Lower lobe of right lung (tissue), 2 donors: ENCODE measurements at regions of chr2 and their contacts with region 1.

Region 1: DNA sequence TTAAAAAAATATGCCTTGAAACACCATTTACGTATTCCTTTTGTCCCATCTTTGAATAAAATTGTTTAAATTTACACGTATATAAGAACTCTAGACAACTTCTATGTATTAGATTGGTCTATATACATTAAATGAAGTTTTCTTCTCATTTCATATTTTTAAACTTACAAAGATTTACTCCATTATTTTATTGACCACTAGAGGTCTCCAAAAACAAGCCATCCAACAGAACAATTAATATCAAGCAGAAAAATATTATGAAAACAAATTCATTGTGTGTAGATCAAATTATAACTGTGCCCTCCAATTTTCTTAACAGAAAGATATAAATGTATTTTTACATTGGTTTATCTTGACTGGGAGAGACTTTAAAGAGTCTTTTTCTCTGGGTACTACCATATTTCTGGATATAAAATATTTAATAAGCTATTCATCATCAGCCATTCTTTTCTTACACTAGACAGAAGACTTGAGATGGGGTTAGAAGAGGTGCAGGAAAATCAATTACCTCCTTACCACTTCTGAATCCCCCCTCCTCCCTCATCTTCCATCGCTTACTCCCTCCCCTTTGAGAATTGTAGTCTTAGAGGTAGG is 66.5 kb downstream of the DPP4 start:
- DNase-seq: no peak
- ATAC-seq: no peak
- H3K4me3 ChIP-seq: no peak overlapping the region
- H3K27ac ChIP-seq: no peak overlapping the region
- H3K4me1 ChIP-seq: no peaks in the 10 kb centered on the region
- H3K27me3 ChIP-seq: no peaks in the 10 kb centered on the region
- CTCF ChIP-seq: peak; percentile 69

Region 2: DNA sequence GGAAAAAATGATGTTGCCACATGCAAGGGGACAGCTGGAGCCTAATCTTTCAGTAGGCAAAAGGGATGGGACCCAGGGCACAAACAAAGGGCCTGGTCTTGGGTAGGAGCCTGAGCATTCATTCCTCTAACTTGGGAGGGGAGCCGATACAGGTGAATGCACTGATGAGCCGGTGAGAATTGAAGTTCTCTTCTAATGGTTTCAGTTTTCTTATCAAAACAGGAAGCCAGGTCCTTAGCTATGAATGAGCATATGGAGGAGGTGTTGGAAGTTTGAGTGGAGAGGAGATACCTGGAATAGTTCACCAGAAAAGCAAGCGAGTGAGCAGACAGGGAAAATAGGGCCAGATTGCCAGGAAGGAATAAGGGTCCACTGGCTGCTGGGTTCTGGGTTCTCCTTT is 56.4 kb after region 1 on chr2:
- intact Hi-C with region 1: no loop called
- DNase-seq: no peak
- ATAC-seq: peak; percentile 37 to 42
- H3K4me3 ChIP-seq: no peak overlapping the region
- H3K27ac ChIP-seq: no peak overlapping the region
- H3K4me1 ChIP-seq: peaks cover 15% of the 10 kb centered on the region
- H3K27me3 ChIP-seq: no peaks in the 10 kb centered on the region
- CTCF ChIP-seq: no peak

Region 3: DNA sequence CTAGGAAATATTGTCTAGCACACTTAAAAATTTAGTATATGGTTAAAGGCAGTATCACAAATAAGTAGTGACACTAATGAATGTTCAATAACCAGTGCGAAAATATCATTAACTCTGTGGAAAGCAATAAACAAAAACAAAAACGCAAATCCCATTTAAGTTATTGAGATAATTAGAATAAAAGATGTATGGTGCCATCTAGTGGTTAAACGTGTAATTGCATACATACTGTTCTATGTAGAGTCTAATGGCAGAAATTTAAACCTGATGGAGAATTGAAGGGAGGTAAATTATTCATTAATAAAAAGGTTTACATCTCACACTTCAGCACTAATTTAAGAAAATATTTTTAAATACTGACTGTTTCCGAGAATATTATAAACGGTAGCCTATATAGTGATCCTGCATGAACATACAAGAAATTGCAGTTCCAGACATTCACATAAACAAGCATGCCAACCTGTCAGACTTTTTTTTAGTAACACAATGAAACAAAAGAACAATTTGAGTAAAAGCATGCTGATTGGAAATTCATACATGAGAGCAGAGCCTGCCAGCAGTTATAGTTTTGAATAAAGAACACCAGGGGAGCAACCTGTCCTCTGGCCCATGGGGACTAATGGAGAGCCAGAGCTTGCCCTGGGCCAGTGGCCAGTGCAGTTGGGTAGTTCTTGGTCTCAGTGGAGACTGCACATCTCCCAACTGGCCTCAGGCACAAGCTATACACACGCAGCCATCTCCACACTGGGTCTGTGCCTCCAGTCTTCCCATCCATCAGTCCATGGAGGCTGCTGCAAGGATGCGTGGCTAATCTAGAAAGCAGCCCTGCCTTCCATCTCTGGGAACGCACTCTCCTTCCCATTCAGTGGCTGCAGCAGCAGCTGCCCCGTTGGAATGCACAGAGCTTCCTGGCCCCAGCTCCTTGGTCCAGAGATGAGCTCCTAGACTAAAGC is 116.5 kb after region 1 on chr2:
- intact Hi-C with region 1: loop called (anchors 5 kb)
- DNase-seq: no peak
- ATAC-seq: peak; percentile 59 to 72
- H3K4me3 ChIP-seq: no peak overlapping the region
- H3K27ac ChIP-seq: no peak overlapping the region
- H3K4me1 ChIP-seq: peaks cover 12% of the 10 kb centered on the region
- H3K27me3 ChIP-seq: no peaks in the 10 kb centered on the region
- CTCF ChIP-seq: peak; percentile 86